Right cardiac atrium (tissue), 5 donors: ENCODE measurements at regions of chr4 and their contacts with region 1.

Region 1: GRCh38 chr4:122749704-122750454 is 17.4 kb downstream of the BBS12 start:
- DNase-seq: no peak
- ATAC-seq: no peak
- H3K4me3 ChIP-seq: no peak overlapping the region
- H3K27ac ChIP-seq: no peak overlapping the region
- H3K4me1 ChIP-seq: no peaks in the 10 kb centered on the region
- H3K27me3 ChIP-seq: no peaks in the 10 kb centered on the region

Region 2: GRCh38 chr4:122914292-122914904 is 164.5 kb after region 1 on chr4:
- intact Hi-C with region 1: loop called in 2 of 4 experiments (anchors 5 kb)
- DNase-seq: no peak
- ATAC-seq: peak in 1 of 2 donors; percentile 62
- H3K4me3 ChIP-seq: no peak overlapping the region
- H3K27ac ChIP-seq: no peak overlapping the region
- H3K4me1 ChIP-seq: no peaks in the 10 kb centered on the region
- H3K27me3 ChIP-seq: no peaks in the 10 kb centered on the region